Naive thymus-derived CD8-positive, alpha-beta T cell (primary cell): ENCODE measurements at regions of chr16 and their contacts with region 1.

Region 1: GRCh38 chr16:85735225-85735635 is 15.7 kb downstream of the C16orf74 start:
- DNase-seq: peak in 9 of 10 donors; percentile 26 to 87 (median 59)
- ATAC-seq: peak; percentile 92 to 96
- H3K4me3 Mint-ChIP-seq: peak overlapping the region; percentile 71 to 89 (median 84)
- H3K27ac Mint-ChIP-seq: peak overlapping the region; percentile 81 to 94 (median 88)
- H3K4me1 Mint-ChIP-seq: peaks cover 17 to 48% (median 43%) of the 10 kb centered on the region in 4 donors
- H3K27me3 Mint-ChIP-seq: no peaks in the 10 kb centered on the region

Region 2: DNA sequence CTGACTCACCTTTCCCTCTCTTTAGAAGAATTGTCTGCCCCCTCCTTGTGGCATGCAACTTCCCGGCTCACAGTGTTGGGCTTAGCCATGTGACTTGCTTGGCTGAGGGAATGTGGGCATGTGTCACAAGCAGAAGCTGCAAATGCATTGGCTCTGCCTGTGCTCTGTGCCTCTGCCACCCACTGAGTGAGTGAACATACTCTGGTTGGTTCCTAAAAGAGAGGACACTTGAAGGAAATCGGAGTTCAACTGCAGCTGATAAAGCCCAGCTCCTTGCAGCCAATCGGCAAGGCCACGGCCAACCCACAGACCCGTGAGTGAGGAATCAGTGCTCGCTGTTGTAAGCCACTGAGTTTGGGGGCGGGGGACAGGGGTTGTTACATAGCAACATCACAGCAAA is 35.6 kb before region 1 on chr16:
- POLR2A ChIA-PET with region 1: no interaction called
- DNase-seq: no peak
- ATAC-seq: no peak
- H3K4me3 Mint-ChIP-seq: no peak overlapping the region
- H3K27ac Mint-ChIP-seq: no peak overlapping the region
- H3K4me1 Mint-ChIP-seq: peaks cover 0 to 3% (median 0%) of the 10 kb centered on the region in 4 donors
- H3K27me3 Mint-ChIP-seq: peaks cover 0 to 8% (median 3%) of the 10 kb centered on the region in 5 donors

Region 3: DNA sequence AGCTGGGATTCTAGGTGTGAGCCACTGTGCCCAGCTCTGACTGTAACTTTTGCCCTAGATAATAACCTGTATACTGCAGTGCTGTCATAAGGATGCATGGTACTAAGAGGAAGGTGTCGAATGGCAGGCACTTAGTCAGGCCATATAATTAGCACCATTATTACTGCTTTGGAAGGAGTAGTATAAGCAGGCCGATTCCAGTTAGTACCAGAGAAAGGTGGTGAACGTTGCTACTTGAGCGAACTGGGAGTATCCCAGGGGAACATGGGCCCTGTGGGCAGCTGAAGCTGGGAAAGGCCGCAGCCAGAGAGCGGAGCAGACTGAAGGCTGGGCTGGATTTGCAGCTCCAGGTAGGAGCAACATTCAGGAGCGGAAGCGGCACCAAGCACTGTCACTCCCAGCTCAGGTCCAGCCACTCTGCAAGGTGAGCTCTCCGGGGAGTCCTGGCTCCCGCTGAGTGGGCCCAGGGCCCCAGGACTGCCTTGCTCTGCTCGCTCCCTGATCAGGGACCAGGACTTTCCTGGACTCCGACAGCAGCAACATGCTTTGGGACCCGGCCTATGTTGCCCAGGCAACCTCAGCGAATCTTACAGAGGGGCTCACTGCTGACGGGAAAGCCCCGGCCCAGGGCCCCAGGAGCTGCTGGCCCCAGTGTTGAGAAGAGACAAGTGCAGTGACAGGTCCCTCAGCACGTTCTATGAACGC is 12.9 kb before region 1 on chr16:
- POLR2A ChIA-PET with region 1: interaction called, 10 read pairs
- DNase-seq: no peak
- ATAC-seq: no peak
- H3K4me3 Mint-ChIP-seq: no peak overlapping the region
- H3K27ac Mint-ChIP-seq: no peak overlapping the region
- H3K4me1 Mint-ChIP-seq: peaks cover 4 to 13% (median 7%) of the 10 kb centered on the region in 4 donors
- H3K27me3 Mint-ChIP-seq: peaks cover 0 to 5% (median 0%) of the 10 kb centered on the region in 5 donors

Region 4: GRCh38 chr16:85750827-85751697 is 15.8 kb after region 1 on chr16 and contains the start of gene C16orf74:
- POLR2A ChIA-PET with region 1: interaction called, 25 read pairs
- DNase-seq: peak in 4 of 10 donors; percentile 15 to 60 (median 28)
- ATAC-seq: peak; percentile 70 to 81
- H3K4me3 Mint-ChIP-seq: peak within 1 kb of the TSS; percentile 86 to 98 (median 92)
- H3K27ac Mint-ChIP-seq: peak within 1 kb of the TSS in 6 of 10 donors; percentile 21 to 89 (median 82)
- H3K4me1 Mint-ChIP-seq: peaks cover 4 to 55% (median 12%) of the 10 kb centered on the region in 4 donors
- H3K27me3 Mint-ChIP-seq: peaks cover 1 to 25% (median 4%) of the 10 kb centered on the region in 5 donors
- polyA plus RNA-seq, gene C16orf74: 16.0 to 19.1 (median 17.2) TPM

Region 5: GRCh38 chr16:85821441-85822135 is 86.4 kb after region 1 on chr16:
- POLR2A ChIA-PET with region 1: no interaction called
- DNase-seq: peak; percentile 59 to 84 (median 79)
- ATAC-seq: peak; percentile 84 to 90
- H3K4me3 Mint-ChIP-seq: no peak overlapping the region
- H3K27ac Mint-ChIP-seq: no peak overlapping the region
- H3K4me1 Mint-ChIP-seq: peaks cover 2 to 17% (median 12%) of the 10 kb centered on the region in 4 donors
- H3K27me3 Mint-ChIP-seq: peaks cover 0 to 8% (median 2%) of the 10 kb centered on the region in 5 donors